Endothelial cell of umbilical vein (primary cell): ENCODE measurements at regions of chr12 and their contacts with region 1.

Region 1: GRCh38 chr12:108826101-108826806 is 31.1 kb downstream of the SSH1 start:
- DNase-seq: peak; percentile 98
- H3K4me3 ChIP-seq: peak overlapping the region in 1 of 3 experiments; percentile 49
- H3K27ac ChIP-seq: peak overlapping the region; percentile 100
- H3K4me1 ChIP-seq: peaks cover 71% of the 10 kb centered on the region
- H3K27me3 ChIP-seq: no peaks in the 10 kb centered on the region
- CTCF ChIP-seq: peak in 1 of 2 donors; percentile 23
- POLR2A ChIP-seq: peak; percentile 31

Region 2: GRCh38 chr12:108731105-108731865 is 95.0 kb before region 1 on chr12 and contains the start of gene CORO1C:
- CTCF ChIA-PET with region 1: no interaction called
- POLR2A ChIA-PET with region 1: no interaction called
- dilution Hi-C with region 1: no loop called
- intact Hi-C with region 1: loop called (anchors 1 kb)
- DNase-seq: peak; percentile 99
- H3K4me3 ChIP-seq: peak within 1 kb of the TSS; percentile 57 to 91 (median 76)
- H3K27ac ChIP-seq: peak within 1 kb of the TSS; percentile 92
- H3K4me1 ChIP-seq: peaks cover 29% of the 10 kb centered on the region
- H3K27me3 ChIP-seq: no peaks in the 10 kb centered on the region
- CTCF ChIP-seq: peak; percentile 89 to 95
- POLR2A ChIP-seq: peak; percentile 93
- total RNA-seq, gene CORO1C: 212 and 240 TPM in 2 replicates

Region 3: DNA sequence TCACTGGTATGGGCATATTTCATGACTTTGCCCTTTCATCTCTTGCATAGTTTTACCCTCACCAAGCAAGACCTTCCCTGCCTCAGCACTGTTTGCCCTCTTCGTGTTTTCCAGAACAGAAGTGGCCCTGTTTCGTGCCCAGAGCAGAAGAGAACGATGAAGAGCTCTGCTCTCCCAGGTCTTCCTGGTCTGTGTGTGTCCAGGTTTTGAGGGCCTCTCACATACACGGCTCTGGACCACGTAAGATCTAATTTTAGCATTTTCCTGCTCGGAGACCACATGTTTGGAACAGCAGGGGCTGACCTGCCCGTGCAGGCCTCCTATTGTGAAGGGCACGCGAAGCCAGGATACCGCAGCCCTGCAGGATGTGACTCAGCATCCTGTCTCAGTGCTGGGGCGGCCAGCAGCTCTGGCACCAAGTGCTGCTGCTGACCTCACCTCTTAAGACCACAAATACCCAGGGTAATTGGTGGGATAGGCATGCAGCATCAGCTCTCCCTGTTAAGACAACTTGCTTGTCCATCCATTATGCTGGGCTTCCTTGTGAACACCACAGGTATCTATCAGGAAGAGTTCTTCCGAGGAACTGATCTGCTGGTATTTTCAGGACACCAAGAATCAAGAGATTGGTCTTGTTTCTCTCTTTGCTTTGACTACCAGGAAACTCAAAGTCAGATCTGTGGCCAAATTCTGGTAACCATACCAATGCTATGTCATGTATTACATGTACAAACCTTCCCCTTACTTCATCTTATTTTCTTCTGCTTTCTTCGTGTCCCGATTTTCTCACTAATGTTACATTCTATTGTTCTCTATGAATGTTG is 12.2 kb after region 1 on chr12:
- CTCF ChIA-PET with region 1: interaction called, 63 read pairs
- POLR2A ChIA-PET with region 1: interaction called, 43 read pairs
- dilution Hi-C with region 1: no loop called
- intact Hi-C with region 1: loop called (anchors 1 kb)
- DNase-seq: peak; percentile 100
- H3K4me3 ChIP-seq: peak overlapping the region in 1 of 3 experiments; percentile 16
- H3K27ac ChIP-seq: peak overlapping the region; percentile 98
- H3K4me1 ChIP-seq: peaks cover 70% of the 10 kb centered on the region
- H3K27me3 ChIP-seq: no peaks in the 10 kb centered on the region
- CTCF ChIP-seq: no peak
- POLR2A ChIP-seq: peak; percentile 79

Region 4: DNA sequence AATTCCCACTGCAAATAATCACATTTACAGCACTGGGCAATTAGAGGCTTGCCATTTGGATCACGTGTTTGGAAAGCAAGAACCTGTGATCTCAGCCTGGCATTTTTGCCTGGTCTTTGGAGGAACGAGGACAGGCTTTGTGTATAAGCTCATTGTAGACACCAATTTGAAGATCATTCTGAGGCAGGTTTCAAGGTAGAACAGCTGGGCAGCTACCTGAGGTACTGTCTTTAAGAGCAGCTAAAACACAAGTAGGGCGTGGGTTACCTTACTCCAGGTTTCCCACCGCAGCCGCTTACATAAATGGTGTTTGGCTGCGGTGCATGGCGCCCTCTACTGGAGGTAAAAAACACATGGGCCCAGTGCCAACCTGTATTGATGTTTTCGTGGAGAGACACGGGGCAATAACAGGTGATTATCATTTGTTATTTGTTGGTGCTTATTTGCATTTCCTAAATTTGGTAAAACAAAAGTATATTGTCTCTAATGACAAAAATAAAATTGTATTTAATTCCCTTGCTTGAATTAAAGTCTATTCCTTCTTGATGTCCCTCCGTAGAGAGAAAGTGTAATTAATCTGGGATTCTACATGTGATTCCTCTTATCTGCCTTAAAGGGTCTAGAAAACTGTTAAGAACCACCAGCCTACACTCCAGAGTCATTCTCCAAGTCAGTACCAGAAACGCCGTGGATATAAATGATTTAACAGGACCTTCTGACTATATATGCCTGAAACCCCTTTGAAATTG is 124.9 kb after region 1 on chr12:
- CTCF ChIA-PET with region 1: interaction called, 13 read pairs
- POLR2A ChIA-PET with region 1: no interaction called
- dilution Hi-C with region 1: no loop called
- intact Hi-C with region 1: loop called (anchors 5 kb)
- DNase-seq: peak; percentile 80
- H3K4me3 ChIP-seq: no peak overlapping the region
- H3K27ac ChIP-seq: no peak overlapping the region
- H3K4me1 ChIP-seq: no peaks in the 10 kb centered on the region
- H3K27me3 ChIP-seq: no peaks in the 10 kb centered on the region
- CTCF ChIP-seq: peak; percentile 74 to 80
- POLR2A ChIP-seq: no peak